H1 (cell line): ENCODE measurements at regions of chr9 and their contacts with region 1.

Region 1: DNA sequence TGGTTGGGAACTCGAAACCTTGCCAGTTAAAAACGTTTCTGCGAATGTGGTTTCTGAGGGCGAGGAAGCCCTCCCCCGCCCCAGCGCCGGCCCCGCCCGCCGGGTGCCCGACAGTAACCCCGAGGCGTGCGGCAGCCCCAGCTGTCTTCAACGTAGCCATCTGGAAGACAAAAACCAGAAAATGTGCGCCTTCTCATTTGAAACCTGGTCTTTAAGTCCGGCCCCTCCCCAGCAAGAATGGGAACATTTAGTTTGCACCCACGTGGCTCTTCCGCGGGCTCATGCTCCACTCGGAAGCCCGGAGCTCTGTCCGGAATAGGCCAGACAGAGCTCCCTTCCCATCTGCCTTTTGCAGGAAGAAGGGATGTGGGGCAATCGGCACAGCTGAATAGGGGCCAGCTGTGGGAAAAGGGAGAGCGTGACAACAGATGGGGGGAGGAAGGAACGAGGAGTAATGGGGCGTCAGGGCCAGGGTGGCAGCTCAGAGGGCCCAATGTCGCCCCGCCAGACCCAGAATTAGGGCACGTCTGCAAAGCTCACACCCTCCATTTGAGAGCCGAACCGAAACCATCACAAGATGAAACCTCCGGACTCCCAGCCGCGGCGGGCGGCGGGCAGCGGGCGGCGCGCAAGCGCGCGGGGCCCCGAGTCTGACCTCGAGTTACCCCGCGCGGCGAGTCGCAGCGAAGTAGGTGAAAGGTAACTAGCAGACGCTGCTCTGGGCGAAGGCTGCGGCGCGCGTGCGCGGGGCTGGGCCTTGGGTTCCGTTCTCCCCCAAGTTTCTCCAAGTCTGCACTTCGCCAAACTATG is 63.4 kb upstream of the ABCA1 start:
- DNase-seq: peak in 1 of 2 experiments; percentile 85
- H3K4me3 ChIP-seq: peak overlapping the region; percentile 40 to 75 (median 67)
- H3K27ac ChIP-seq: peak overlapping the region; percentile 44
- H3K4me1 ChIP-seq: peaks cover 21 to 31% (median 26%) of the 10 kb centered on the region in 4 experiments
- H3K27me3 ChIP-seq: peaks cover 3 to 18% (median 8%) of the 10 kb centered on the region in 4 experiments; a peak in 4 of 7 replicates
- CTCF ChIP-seq: no peak
- EP300 ChIP-seq: no peak
- POLR2A ChIP-seq: peak in 1 of 2 experiments; percentile 57; a peak in 2 of 3 replicates
- RAD21 ChIP-seq: no peak; a peak in 1 of 4 replicates

Region 2: DNA sequence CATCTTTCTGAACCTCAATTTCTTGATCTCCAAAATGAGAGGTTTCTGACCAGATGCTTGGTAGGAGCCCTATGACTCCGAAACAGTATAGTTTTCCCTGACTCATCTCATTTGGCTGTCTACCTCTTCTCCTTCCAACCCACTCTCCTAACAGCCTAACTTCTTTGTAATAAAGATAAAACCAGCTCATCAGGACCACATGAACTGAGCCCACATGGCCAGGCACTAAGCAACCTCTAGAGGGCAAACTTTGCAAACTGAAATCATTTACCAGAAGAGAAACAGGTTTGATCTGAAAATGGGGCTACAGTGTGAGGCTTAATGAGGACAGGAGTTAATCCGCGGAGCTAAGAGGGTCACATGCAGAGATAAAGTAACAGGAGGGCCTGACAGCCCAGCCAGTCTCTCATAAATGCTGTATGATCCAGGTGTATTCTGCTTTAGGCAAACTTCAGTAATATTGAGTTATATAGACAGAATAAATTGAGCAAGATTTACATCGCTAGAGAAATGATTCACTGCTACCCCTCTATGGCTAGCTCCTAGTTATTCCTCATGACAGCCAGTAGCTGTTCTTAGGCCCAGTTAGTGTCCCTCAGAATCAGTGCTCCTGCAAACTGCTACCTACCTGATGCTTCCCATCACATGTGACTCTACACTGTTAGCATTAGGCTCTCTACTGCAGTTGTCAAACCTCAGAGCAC is 128.0 kb before region 1 on chr9:
- CTCF ChIA-PET with region 1: interaction called, 10 read pairs
- POLR2A ChIA-PET with region 1: interaction called, 8 read pairs
- DNase-seq: no peak
- H3K4me3 ChIP-seq: peak overlapping the region in 1 of 4 experiments; percentile 7; a peak in 1 of 8 replicates
- H3K27ac ChIP-seq: no peak overlapping the region
- H3K4me1 ChIP-seq: peaks cover 14 to 30% (median 26%) of the 10 kb centered on the region in 4 experiments
- H3K27me3 ChIP-seq: no peaks in the 10 kb centered on the region
- CTCF ChIP-seq: peak in 2 of 3 experiments; percentile 65 to 86; a peak in 3 of 4 replicates
- EP300 ChIP-seq: no peak
- POLR2A ChIP-seq: no peak
- RAD21 ChIP-seq: peak; percentile 89 to 90

Region 3: GRCh38 chr9:104900871-104901270 is 90.5 kb before region 1 on chr9:
- CTCF ChIA-PET with region 1: no interaction called
- POLR2A ChIA-PET with region 1: no interaction called
- DNase-seq: no peak
- H3K4me3 ChIP-seq: no peak overlapping the region
- H3K27ac ChIP-seq: no peak overlapping the region
- H3K4me1 ChIP-seq: peaks cover 0 to 5% (median 4%) of the 10 kb centered on the region in 4 experiments; a peak in 4 of 7 replicates
- H3K27me3 ChIP-seq: no peaks in the 10 kb centered on the region
- CTCF ChIP-seq: no peak
- EP300 ChIP-seq: no peak
- POLR2A ChIP-seq: no peak
- RAD21 ChIP-seq: no peak

Region 4: DNA sequence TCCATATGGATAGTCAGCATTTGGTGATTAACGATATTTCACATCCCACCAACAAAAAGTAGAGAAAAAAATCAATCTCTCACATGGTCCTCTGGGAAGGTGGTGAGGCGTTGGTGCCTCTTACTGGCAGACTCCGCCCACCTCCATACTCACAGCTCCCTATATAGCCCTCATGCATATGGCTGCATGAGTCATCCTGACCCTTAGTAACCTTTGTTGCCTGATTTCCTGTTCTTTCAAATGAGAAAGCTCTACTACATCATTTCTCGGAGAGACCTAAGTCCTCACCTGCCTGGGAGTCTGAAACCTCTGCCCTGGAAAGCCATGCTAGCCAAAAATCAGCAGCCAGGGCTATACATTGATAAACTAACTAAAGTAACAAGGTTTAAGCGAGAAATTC is 30.1 kb before region 1 on chr9:
- CTCF ChIA-PET with region 1: no interaction called
- POLR2A ChIA-PET with region 1: interaction called, 10 read pairs
- DNase-seq: peak; percentile 38 to 54
- H3K4me3 ChIP-seq: peak overlapping the region in 1 of 4 experiments; percentile 2; a peak in 1 of 8 replicates
- H3K27ac ChIP-seq: no peak overlapping the region
- H3K4me1 ChIP-seq: peaks cover 4 to 7% (median 5%) of the 10 kb centered on the region in 4 experiments; a peak in 5 of 7 replicates
- H3K27me3 ChIP-seq: no peaks in the 10 kb centered on the region
- CTCF ChIP-seq: no peak
- EP300 ChIP-seq: no peak
- POLR2A ChIP-seq: peak in 1 of 2 experiments; percentile 65; a peak in 1 of 3 replicates
- RAD21 ChIP-seq: 0 out of 4 replicates have a peak, but pooled peaks of 1 of the 2 experiments have one; percentile 8

Region 5: GRCh38 chr9:104968025-104968982 is 23.0 kb before region 1 on chr9:
- CTCF ChIA-PET with region 1: interaction called, 6 read pairs
- POLR2A ChIA-PET with region 1: interaction called, 41 read pairs
- DNase-seq: peak in 1 of 2 experiments; percentile 92
- H3K4me3 ChIP-seq: peak overlapping the region; percentile 83 to 93 (median 90)
- H3K27ac ChIP-seq: peak overlapping the region; percentile 82
- H3K4me1 ChIP-seq: peaks cover 5 to 12% (median 9%) of the 10 kb centered on the region in 4 experiments
- H3K27me3 ChIP-seq: no peaks in the 10 kb centered on the region
- CTCF ChIP-seq: no peak; a peak in 1 of 4 replicates
- EP300 ChIP-seq: peak in 1 of 2 experiments; percentile 24; a peak in 1 of 3 replicates
- POLR2A ChIP-seq: peak in 1 of 2 experiments; percentile 50; a peak in 1 of 3 replicates
- RAD21 ChIP-seq: 0 out of 4 replicates have a peak, but pooled peaks have one; percentile 0 to 8

Region 6: GRCh38 chr9:105385381-105385985 is 394.1 kb after region 1 on chr9:
- CTCF ChIA-PET with region 1: no interaction called
- POLR2A ChIA-PET with region 1: no interaction called
- DNase-seq: no peak
- H3K4me3 ChIP-seq: no peak overlapping the region
- H3K27ac ChIP-seq: no peak overlapping the region
- H3K4me1 ChIP-seq: peaks cover 0 to 8% (median 3%) of the 10 kb centered on the region in 4 experiments; a peak in 5 of 7 replicates
- H3K27me3 ChIP-seq: no peaks in the 10 kb centered on the region
- CTCF ChIP-seq: no peak
- EP300 ChIP-seq: no peak
- POLR2A ChIP-seq: no peak
- RAD21 ChIP-seq: no peak